Activated CD8-positive, alpha-beta memory T cell treated with anti-CD3 and anti-CD28 coated beads, Interleukin-2, amount 10 ng/mL, durations not matched to agents 7 days and 5 days (primary cell): ENCODE measurements at regions of chr10 and their contacts with region 1.

Region 1: GRCh38 chr10:7027913-7028808 is 382.7 kb downstream of the SFMBT2 start:
- DNase-seq: no peak
- ATAC-seq: peak; percentile 48
- H3K4me3 Mint-ChIP-seq: peak overlapping the region; percentile 0
- H3K27ac Mint-ChIP-seq: peak overlapping the region; percentile 96
- H3K4me1 Mint-ChIP-seq: peaks cover 65% of the 10 kb centered on the region
- H3K27me3 Mint-ChIP-seq: no peaks in the 10 kb centered on the region

Region 2: DNA sequence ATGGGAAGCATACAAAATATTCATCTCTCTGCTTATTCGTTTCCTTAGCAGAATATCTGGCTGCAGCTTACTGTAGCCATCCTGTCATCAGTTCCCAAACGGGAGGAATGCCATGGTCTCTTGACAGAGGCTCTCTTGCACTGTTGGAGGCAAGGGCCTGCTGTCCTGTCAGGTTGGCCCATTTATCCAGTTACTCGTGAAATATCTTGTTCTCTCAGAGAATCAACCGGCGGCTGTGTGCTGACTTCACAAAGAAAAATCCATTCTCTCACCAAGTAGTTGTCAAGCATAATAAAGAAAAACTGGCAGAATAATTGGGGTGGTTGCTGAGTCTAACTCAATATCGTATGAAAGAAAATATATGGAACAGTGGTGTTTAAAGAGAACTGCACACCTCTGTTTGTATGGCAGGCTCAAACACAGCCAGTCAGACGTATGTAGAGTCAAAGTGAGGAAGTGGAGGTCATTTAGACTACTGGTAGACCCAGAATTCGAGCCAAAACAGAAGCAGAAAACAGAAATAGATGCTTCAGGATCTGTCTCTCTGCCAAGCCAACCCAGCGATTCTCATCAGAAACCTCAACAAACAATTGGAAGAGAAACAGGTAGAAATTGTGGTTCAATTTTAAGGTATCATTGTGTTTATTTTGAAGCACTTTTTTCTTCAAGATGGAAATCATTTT is 98.9 kb before region 1 on chr10:
- CTCF ChIA-PET with region 1: interaction called, 13 read pairs
- DNase-seq: no peak
- ATAC-seq: no peak
- H3K4me3 Mint-ChIP-seq: peak overlapping the region; percentile 23
- H3K27ac Mint-ChIP-seq: peak overlapping the region; percentile 100
- H3K4me1 Mint-ChIP-seq: peaks cover 57% of the 10 kb centered on the region
- H3K27me3 Mint-ChIP-seq: no peaks in the 10 kb centered on the region